GM12878 (cell line): ENCODE measurements at regions of chr4 and their contacts with region 1.

Region 1: DNA sequence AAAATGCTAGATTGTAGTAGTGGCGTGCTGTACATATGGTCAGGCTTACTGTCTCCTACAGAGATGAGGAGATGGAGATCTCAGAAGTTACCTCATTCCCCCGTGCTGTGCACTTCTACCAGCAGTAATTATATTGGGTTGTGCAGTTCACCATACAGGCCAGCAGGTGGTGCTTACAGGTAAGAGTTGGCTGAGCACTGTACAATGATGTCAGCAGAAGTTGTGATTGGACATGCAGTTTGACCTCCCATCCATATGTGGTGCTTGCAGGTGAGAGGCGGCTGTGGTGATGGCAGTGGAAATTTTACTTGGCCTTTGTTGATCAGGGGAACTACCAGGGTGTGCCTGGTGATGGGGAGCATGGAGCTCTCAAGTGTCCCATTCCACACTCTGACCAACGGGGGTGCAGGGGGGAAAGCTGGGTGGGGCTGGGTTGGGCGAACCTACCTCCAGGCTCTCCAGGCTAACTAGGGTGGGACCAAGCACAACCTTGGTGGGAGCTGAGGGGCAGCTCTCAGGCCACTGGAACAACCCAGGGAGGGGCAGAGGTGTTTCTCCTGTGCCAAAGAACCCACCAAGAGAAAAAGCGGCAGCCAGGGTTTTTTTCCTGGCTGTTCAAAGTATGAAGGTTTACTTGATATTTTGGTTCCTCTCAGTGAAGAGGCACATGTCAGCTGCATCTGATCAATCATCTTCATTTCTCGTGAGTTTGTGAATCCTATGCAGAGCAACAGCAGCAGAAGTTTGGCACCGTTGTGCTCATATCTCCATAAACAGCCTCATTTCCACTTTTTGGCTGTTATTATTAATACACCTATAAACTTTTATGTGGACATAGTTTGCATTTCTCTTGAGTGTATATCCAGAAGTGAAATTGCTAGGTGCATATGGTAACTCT is 73.8 kb upstream of the FREM3 start:
- DNase-seq: peak; percentile 31
- ATAC-seq: peak; percentile 100
- H3K4me3 ChIP-seq: no peak overlapping the region
- H3K27ac ChIP-seq: no peak overlapping the region
- H3K4me1 ChIP-seq: no peaks in the 10 kb centered on the region
- H3K27me3 ChIP-seq: no peaks in the 10 kb centered on the region
- CTCF ChIP-seq: peak; percentile 76 to 89 (median 87); a peak in 5 of 6 replicates
- EP300 ChIP-seq: no peak
- POLR2A ChIP-seq: no peak
- RAD21 ChIP-seq: peak; percentile 92

Region 2: DNA sequence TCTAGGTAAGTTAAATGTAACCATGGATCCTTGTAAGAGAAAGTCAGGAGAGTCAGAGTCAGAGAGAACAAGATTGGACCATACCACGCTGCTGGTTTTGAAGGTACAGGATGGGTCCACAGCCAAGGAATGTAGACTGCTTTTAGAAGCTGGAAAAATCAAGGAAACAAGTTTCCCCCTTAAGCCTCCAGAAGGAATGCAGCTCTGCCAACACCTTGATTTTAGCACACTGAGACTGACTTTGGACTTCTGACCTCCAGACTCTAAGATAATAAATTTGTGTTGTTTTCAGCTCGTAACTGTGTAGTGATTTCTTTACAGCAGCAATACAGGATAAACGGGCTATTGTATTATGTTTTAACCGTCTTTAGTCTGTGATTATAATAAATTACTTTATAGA is 697.5 kb before region 1 on chr4:
- CTCF ChIA-PET with region 1: no interaction called
- POLR2A ChIA-PET with region 1: no interaction called
- RAD21 ChIA-PET with region 1: no interaction called
- SMC1A ChIA-PET with region 1: no interaction called
- in situ Hi-C with region 1: no loop called
- intact Hi-C with region 1: no loop called
- DNase-seq: no peak
- ATAC-seq: no peak
- H3K4me3 ChIP-seq: no peak overlapping the region
- H3K27ac ChIP-seq: no peak overlapping the region
- H3K4me1 ChIP-seq: no peaks in the 10 kb centered on the region
- H3K27me3 ChIP-seq: no peaks in the 10 kb centered on the region
- CTCF ChIP-seq: no peak
- EP300 ChIP-seq: no peak
- POLR2A ChIP-seq: no peak
- RAD21 ChIP-seq: no peak

Region 3: GRCh38 chr4:143986180-143986579 is 211.9 kb after region 1 on chr4:
- CTCF ChIA-PET with region 1: interaction called, 6 read pairs
- POLR2A ChIA-PET with region 1: no interaction called
- RAD21 ChIA-PET with region 1: no interaction called
- SMC1A ChIA-PET with region 1: no interaction called
- in situ Hi-C with region 1: no loop called
- intact Hi-C with region 1: loop called (anchors 5 kb)
- DNase-seq: no peak
- ATAC-seq: no peak
- H3K4me3 ChIP-seq: no peak overlapping the region
- H3K27ac ChIP-seq: no peak overlapping the region
- H3K4me1 ChIP-seq: no peaks in the 10 kb centered on the region
- H3K27me3 ChIP-seq: no peaks in the 10 kb centered on the region
- CTCF ChIP-seq: no peak
- EP300 ChIP-seq: no peak
- POLR2A ChIP-seq: no peak
- RAD21 ChIP-seq: no peak

Region 4: GRCh38 chr4:144141493-144141892 is 367.2 kb after region 1 on chr4:
- CTCF ChIA-PET with region 1: no interaction called
- POLR2A ChIA-PET with region 1: no interaction called
- RAD21 ChIA-PET with region 1: no interaction called
- SMC1A ChIA-PET with region 1: no interaction called
- in situ Hi-C with region 1: no loop called
- intact Hi-C with region 1: loop called (anchors 2 kb)
- DNase-seq: no peak
- ATAC-seq: no peak
- H3K4me3 ChIP-seq: no peak overlapping the region
- H3K27ac ChIP-seq: no peak overlapping the region
- H3K4me1 ChIP-seq: no peaks in the 10 kb centered on the region
- H3K27me3 ChIP-seq: no peaks in the 10 kb centered on the region
- CTCF ChIP-seq: no peak
- EP300 ChIP-seq: no peak
- POLR2A ChIP-seq: no peak
- RAD21 ChIP-seq: no peak